Activated CD4-positive, alpha-beta T cell treated with anti-CD3 and anti-CD28 coated beads for 36 hours (primary cell): ENCODE measurements at regions of chr19 and their contacts with region 1.

Region 1: DNA sequence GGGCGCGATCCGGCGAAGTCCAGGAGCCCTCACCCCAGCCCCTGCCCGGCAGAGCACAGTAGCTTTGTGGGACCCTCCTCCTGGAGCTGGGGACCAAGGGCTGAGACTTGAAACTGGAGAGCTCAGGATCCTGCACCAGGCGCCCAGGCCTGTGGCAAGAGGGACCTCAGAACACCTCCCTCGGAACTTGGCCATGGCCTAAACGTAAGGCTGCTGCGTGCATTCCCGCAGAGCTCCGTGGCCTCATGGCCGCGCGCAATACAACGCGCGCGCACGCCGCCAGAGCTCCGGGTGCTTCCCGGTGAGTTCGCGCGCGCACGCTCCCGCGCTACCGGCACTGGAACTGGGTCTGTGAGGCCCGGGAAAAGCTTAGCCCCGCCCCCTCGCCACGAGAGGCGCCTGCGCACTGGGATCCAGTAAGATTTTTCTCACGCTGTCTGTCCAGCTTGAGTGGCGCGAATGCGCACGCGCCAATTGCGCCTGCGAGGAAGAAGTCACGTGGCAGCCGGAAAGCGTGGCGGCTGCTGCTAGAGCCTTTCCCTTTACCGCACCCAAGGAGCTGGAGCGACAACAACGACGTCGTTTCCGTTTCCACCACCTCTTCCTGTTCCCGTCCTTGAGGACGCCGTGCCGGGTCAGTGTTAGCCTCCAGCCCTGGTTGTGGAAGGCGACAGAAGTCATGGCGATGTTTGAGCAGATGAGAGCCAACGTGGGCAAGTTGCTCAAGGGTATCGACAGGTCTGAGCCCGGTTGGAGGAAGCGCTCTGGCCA is at the start of gene EIF3K:
- DNase-seq: peak; percentile 99
- ATAC-seq: peak; percentile 74
- H3K4me3 Mint-ChIP-seq: peak within 1 kb of the TSS; percentile 100
- H3K27ac Mint-ChIP-seq: peak within 1 kb of the TSS; percentile 99
- H3K4me1 Mint-ChIP-seq: peaks cover 44% of the 10 kb centered on the region
- H3K27me3 Mint-ChIP-seq: no peaks in the 10 kb centered on the region
- total RNA-seq, gene EIF3K: 269 to 297 TPM

Region 2: GRCh38 chr19:38229585-38230073 is 389.1 kb before region 1 on chr19:
- CTCF ChIA-PET with region 1: no interaction called
- POLR2A ChIA-PET with region 1: no interaction called
- intact Hi-C with region 1: loop called in 1 of 2 experiments (anchors 1 kb)
- DNase-seq: peak; percentile 87
- ATAC-seq: peak; percentile 96
- H3K4me3 Mint-ChIP-seq: no peak overlapping the region
- H3K27ac Mint-ChIP-seq: no peak overlapping the region
- H3K4me1 Mint-ChIP-seq: peaks cover 8% of the 10 kb centered on the region
- H3K27me3 Mint-ChIP-seq: peaks cover 39% of the 10 kb centered on the region

Region 3: DNA sequence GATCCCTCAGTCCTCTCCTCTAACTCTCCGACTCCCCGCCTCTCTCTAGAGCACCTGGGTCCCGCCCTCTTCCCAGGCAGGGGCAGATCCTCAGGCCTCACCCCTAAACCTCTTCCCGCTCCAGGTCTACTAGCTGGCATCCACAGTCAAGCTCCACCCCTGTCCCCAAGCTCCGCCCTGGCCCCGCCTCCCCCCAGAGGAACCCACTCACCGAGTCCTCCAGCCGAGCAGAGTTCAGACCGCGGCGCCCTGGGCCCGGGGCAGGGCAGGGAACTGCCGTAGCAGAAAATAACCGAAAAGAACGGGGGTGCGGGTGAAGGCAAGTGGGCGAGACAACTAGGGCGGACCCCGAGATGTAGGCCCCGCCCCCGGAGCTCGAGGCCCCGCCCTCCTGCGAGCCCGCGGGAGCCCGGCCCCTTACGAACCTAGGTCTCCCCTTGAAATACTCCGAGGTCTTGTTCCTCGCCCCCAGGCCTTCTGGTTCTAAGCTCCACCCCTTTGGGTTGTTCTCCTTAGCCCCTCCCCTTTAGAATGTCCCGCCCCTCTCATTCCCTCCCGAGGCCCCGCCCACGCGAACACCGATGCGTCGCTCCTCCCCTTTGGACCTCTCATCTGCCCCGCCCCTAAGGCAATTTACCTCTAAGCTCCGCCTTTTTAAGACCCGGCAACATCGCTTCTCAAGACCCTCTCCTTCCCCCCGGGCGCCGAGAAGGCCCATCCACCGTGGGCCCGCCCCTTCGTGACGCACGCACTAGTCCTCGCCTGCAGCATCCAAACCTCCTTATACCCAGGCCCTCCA is 231.0 kb before region 1 on chr19 and contains the start of gene GGN:
- CTCF ChIA-PET with region 1: no interaction called
- POLR2A ChIA-PET with region 1: no interaction called
- intact Hi-C with region 1: loop called in 1 of 2 experiments (anchors 5 kb)
- DNase-seq: peak; percentile 94
- ATAC-seq: peak; percentile 81
- H3K4me3 Mint-ChIP-seq: peak within 1 kb of the TSS; percentile 75
- H3K27ac Mint-ChIP-seq: peak within 1 kb of the TSS; percentile 76
- H3K4me1 Mint-ChIP-seq: peaks cover 26% of the 10 kb centered on the region
- H3K27me3 Mint-ChIP-seq: peaks cover 14% of the 10 kb centered on the region
- total RNA-seq, gene GGN: 0.30 to 0.51 TPM

Region 4: GRCh38 chr19:38483016-38483630 is 135.7 kb before region 1 on chr19:
- CTCF ChIA-PET with region 1: no interaction called
- POLR2A ChIA-PET with region 1: no interaction called
- intact Hi-C with region 1: no loop called
- DNase-seq: no peak
- ATAC-seq: no peak
- H3K4me3 Mint-ChIP-seq: no peak overlapping the region
- H3K27ac Mint-ChIP-seq: no peak overlapping the region
- H3K4me1 Mint-ChIP-seq: no peaks in the 10 kb centered on the region
- H3K27me3 Mint-ChIP-seq: peaks cover 6% of the 10 kb centered on the region

Region 5: GRCh38 chr19:38506723-38507550 is 111.8 kb before region 1 on chr19:
- CTCF ChIA-PET with region 1: no interaction called
- POLR2A ChIA-PET with region 1: interaction called, 4 read pairs
- intact Hi-C with region 1: loop called in 1 of 2 experiments (anchors 1 kb)
- DNase-seq: peak; percentile 98
- ATAC-seq: peak; percentile 94
- H3K4me3 Mint-ChIP-seq: no peak overlapping the region
- H3K27ac Mint-ChIP-seq: no peak overlapping the region
- H3K4me1 Mint-ChIP-seq: peaks cover 6% of the 10 kb centered on the region
- H3K27me3 Mint-ChIP-seq: peaks cover 2% of the 10 kb centered on the region

Region 6: DNA sequence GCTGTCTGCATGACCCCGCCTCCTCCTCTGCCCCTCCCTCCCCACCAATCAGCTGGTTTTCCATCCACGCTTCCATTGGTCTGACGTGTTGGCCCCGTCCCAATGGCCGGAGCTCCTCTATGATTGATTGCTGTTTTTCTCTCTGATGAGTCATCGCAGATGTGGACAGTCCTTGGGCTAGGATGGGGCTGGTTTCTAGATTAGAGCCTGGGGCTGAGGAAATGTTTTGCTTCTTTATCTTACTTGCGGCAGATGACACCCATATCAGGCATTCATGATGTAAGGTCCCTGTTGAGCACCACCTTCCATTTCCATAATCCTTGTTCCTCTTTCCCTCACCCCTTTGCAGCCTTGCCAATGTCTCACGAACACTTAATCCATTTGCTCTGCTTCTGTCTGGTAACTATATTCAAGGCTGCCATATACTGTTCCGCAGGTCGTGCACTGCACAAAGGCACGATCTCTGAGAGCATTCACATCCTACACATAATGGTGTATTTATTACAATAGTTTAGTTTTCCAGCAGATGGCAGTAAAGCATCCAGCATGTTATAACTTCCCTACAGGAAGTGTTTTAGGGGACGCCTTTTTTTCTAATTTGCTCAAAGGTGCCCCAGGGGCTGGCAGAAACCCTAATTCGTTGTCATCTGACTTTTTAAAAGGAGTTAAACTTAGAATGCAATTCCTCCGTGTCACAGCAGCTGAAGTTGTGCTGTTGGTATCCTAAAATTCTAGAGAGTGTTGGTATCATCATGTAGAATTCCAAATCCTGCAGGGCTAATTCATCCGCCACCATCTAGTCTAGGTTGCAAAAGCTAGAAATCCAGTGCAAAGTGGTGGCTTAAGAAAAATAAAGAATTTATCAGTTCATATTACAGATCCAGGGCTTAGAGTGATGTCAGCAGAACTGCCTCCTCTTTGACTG is 74.5 kb before region 1 on chr19:
- CTCF ChIA-PET with region 1: interaction called, 16 read pairs
- POLR2A ChIA-PET with region 1: no interaction called
- intact Hi-C with region 1: loop called (anchors 1 kb)
- DNase-seq: peak; percentile 72
- ATAC-seq: peak; percentile 89
- H3K4me3 Mint-ChIP-seq: peak overlapping the region; percentile 63
- H3K27ac Mint-ChIP-seq: peak overlapping the region; percentile 61
- H3K4me1 Mint-ChIP-seq: peaks cover 24% of the 10 kb centered on the region
- H3K27me3 Mint-ChIP-seq: no peaks in the 10 kb centered on the region

Region 7: GRCh38 chr19:38658462-38659306 is 39.9 kb after region 1 on chr19:
- CTCF ChIA-PET with region 1: no interaction called
- POLR2A ChIA-PET with region 1: no interaction called
- intact Hi-C with region 1: loop called in 1 of 2 experiments (anchors 2 kb)
- DNase-seq: no peak
- ATAC-seq: no peak
- H3K4me3 Mint-ChIP-seq: no peak overlapping the region
- H3K27ac Mint-ChIP-seq: no peak overlapping the region
- H3K4me1 Mint-ChIP-seq: peaks cover 69% of the 10 kb centered on the region
- H3K27me3 Mint-ChIP-seq: peaks cover 3% of the 10 kb centered on the region

Region 8: DNA sequence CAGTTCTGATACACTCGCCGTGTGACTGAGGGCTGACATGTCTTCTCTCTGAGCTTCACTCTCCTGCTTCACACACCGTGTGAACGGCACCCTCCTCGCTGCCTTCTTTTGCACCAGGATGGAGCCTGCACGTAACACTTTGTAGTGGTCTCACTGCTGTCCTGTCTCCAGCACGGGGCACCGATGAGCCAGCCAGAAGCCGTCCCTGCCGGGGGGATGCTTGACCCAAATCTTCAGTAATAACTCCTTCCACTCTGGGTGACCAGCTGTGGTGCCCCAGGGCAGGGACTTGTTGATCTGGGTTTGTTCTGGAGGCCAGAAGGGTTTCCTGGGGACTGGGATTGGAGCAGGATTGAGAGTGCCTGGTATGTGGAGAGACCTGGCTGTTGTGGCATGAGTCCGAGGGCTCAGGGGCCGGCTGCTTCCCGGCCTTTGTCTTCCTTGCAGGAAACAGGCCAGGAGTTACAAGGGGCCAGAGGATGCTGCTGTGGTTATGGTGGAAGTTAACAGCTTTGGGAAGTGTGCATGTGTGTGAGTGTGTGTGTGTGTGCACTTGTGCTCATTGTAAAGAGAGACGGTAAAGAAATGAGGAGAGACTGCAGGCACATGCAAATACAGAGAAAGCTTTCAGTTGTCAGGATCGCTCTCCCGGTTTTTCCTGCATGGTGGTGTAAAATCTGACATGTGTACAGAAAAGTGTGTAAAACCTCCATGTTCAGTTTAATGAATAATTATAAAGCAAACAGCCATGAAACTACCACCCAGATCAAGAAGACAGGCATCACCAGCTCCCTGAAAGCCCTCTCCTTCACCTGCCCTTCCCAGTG is 525.7 kb after region 1 on chr19:
- CTCF ChIA-PET with region 1: no interaction called
- POLR2A ChIA-PET with region 1: no interaction called
- intact Hi-C with region 1: no loop called
- DNase-seq: no peak
- ATAC-seq: no peak
- H3K4me3 Mint-ChIP-seq: no peak overlapping the region
- H3K27ac Mint-ChIP-seq: no peak overlapping the region
- H3K4me1 Mint-ChIP-seq: peaks cover 4% of the 10 kb centered on the region
- H3K27me3 Mint-ChIP-seq: no peaks in the 10 kb centered on the region

Region 9: GRCh38 chr19:39390755-39391592 is 772.2 kb after region 1 on chr19 and contains the starts of genes MED29 and PAF1:
- CTCF ChIA-PET with region 1: no interaction called
- POLR2A ChIA-PET with region 1: no interaction called
- intact Hi-C with region 1: loop called in 1 of 2 experiments (anchors 2 kb)
- DNase-seq: peak; percentile 98
- ATAC-seq: peak; percentile 97
- H3K4me3 Mint-ChIP-seq: peak within 1 kb of the TSS; percentile 99
- H3K27ac Mint-ChIP-seq: peak within 1 kb of the TSS; percentile 98
- H3K4me1 Mint-ChIP-seq: peaks cover 28% of the 10 kb centered on the region
- H3K27me3 Mint-ChIP-seq: no peaks in the 10 kb centered on the region
- total RNA-seq, gene MED29: 24.0 to 34.6 TPM
- total RNA-seq, gene PAF1: 40.4 to 54.2 TPM